ENCODE measurements at regions of chr4 and their contacts with region 1.

Region 1: DNA sequence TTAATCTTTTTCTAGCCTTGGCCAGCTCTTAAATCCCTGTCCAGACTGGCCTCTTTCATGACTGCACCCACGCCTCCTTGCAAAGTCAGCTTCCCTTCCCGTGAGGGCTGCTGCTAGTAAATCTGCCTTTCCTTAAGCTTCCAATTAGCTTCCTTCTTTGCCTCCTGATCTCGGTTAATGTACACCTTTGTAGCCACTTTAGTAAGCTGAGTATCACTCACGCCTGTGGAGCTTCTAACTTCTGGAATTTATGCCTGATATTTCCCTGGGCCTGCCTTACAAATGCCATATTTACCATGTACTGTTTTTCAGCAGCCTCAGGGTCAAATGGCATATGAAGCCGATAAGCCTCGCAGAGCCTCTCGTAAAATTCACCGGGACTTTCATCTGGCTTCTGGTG is 5.1 kb upstream of the UGT8 start:
- DNase-seq: no peak
- H3K4me3 Mint-ChIP-seq: no peak overlapping the region
- H3K27ac Mint-ChIP-seq: no peak overlapping the region
- H3K4me1 Mint-ChIP-seq: peaks cover 3% of the 10 kb centered on the region
- H3K27me3 Mint-ChIP-seq: peaks cover 22% of the 10 kb centered on the region

Region 2: GRCh38 chr4:114582621-114583020 is 10.9 kb before region 1 on chr4:
- CTCF ChIA-PET with region 1: interaction called, 3 read pairs
- POLR2A ChIA-PET with region 1: no interaction called
- intact Hi-C with region 1: loop called (anchors 1 kb)
- DNase-seq: no peak
- H3K4me3 Mint-ChIP-seq: no peak overlapping the region
- H3K27ac Mint-ChIP-seq: no peak overlapping the region
- H3K4me1 Mint-ChIP-seq: no peaks in the 10 kb centered on the region
- H3K27me3 Mint-ChIP-seq: no peaks in the 10 kb centered on the region

Region 3: DNA sequence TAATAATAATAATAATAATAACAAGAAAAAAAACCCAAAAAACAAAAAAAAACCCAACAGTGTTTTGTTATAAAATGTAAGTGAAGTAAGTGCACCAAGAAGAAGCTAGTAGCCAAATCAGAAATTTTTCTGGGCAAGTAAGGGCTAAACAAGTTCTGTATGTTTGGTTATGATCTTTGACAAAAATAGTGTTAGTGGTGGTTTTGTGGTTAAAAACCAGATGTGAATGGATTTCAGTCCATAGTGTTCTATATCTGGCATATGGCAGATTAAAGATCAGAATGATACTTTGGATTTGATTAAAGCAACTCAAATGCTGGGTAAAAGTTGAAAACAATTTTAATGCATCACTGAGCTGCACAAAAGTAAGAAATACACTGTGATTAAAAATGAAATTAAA is 636.3 kb after region 1 on chr4:
- CTCF ChIA-PET with region 1: no interaction called
- POLR2A ChIA-PET with region 1: no interaction called
- intact Hi-C with region 1: no loop called
- DNase-seq: no peak
- H3K4me3 Mint-ChIP-seq: no peak overlapping the region
- H3K27ac Mint-ChIP-seq: no peak overlapping the region
- H3K4me1 Mint-ChIP-seq: no peaks in the 10 kb centered on the region
- H3K27me3 Mint-ChIP-seq: no peaks in the 10 kb centered on the region

Measured in activated CD4-positive, alpha-beta memory T cell treated with anti-CD3 and anti-CD28 coated beads for 36 hours (primary cell).